Ascending aorta (tissue), 2 donors: ENCODE measurements at regions of chr6 and their contacts with region 1.

Region 1: GRCh38 chr6:72622094-72622940 is 453 bp downstream of the KCNQ5 start:
- DNase-seq: peak in 1 of 2 donors; percentile 72
- H3K4me3 ChIP-seq: peak overlapping the region; percentile 66 to 84
- H3K27ac ChIP-seq: peak overlapping the region; percentile 64 to 82
- H3K4me1 ChIP-seq: peaks cover 0 to 4% of the 10 kb centered on the region in 2 donors
- H3K27me3 ChIP-seq: no peaks in the 10 kb centered on the region
- CTCF ChIP-seq: peak in 2 of 3 experiments; percentile 12 to 42

Region 2: GRCh38 chr6:72411872-72412708 is 210.2 kb before region 1 on chr6:
- intact Hi-C with region 1: loop called (anchors 10 kb)
- DNase-seq: peak in 1 of 2 donors; percentile 85
- H3K4me3 ChIP-seq: no peak overlapping the region
- H3K27ac ChIP-seq: no peak overlapping the region
- H3K4me1 ChIP-seq: no peaks in the 10 kb centered on the region
- H3K27me3 ChIP-seq: no peaks in the 10 kb centered on the region
- CTCF ChIP-seq: peak; percentile 99 to 100 (median 100)

Region 3: GRCh38 chr6:72654071-72654621 is 31.8 kb after region 1 on chr6:
- intact Hi-C with region 1: loop called (anchors 2 kb)
- DNase-seq: no peak
- H3K4me3 ChIP-seq: no peak overlapping the region
- H3K27ac ChIP-seq: no peak overlapping the region
- H3K4me1 ChIP-seq: peaks cover 0 to 5% of the 10 kb centered on the region in 2 donors
- H3K27me3 ChIP-seq: no peaks in the 10 kb centered on the region
- CTCF ChIP-seq: no peak

Region 4: DNA sequence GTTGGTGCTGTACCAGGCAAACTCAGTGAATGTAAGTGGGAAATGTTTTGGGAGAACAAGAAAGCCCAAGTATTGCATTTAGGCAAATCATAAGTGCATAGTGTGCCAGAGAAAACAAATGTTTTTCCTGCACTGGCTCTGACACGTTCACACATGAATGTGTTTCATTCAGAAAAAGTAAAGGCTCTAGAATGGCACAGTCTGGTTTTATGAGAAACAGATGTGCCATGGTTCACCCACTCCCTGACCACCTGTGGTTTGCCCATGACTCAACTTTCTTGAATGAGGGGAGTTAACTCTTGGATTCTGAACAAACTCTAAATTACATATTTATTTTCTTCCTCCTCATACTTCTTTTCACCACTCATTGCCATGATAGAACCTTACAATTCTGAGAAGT is 126.4 kb after region 1 on chr6:
- intact Hi-C with region 1: loop called (anchors 5 kb)
- DNase-seq: no peak
- H3K4me3 ChIP-seq: no peak overlapping the region
- H3K27ac ChIP-seq: no peak overlapping the region
- H3K4me1 ChIP-seq: peaks cover 5 to 11% of the 10 kb centered on the region in 2 donors
- H3K27me3 ChIP-seq: no peaks in the 10 kb centered on the region
- CTCF ChIP-seq: no peak

Region 5: GRCh38 chr6:72811971-72812421 is 189.7 kb after region 1 on chr6:
- intact Hi-C with region 1: no loop called
- DNase-seq: no peak
- H3K4me3 ChIP-seq: no peak overlapping the region
- H3K27ac ChIP-seq: no peak overlapping the region
- H3K4me1 ChIP-seq: peaks cover 0 to 17% of the 10 kb centered on the region in 2 donors
- H3K27me3 ChIP-seq: no peaks in the 10 kb centered on the region
- CTCF ChIP-seq: no peak

Region 6: DNA sequence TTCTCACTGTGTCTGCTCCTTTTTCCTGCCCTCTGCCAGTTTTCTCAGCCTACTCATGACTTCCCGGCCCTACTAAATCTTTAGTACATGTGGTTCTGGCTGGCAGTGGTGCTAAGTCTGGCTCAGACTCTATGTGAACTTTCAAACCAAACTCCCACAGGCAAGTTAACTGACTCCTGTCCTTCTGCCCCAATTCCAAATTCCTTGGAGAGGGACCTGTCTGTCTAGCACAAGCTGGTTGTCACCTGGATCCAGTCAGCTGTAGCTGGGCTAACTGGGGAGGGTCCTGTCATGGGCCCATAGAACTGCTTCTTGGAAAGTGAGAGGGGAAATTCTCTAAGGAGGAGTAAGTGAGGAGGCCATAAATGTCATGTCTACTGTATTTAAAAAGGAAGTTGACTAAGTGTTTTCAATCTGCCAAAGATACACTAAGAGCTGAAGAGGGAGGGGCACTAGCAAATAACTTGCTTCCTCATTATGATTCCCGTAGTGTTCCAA is 239.7 kb after region 1 on chr6:
- intact Hi-C with region 1: loop called (anchors 5 kb)
- DNase-seq: peak in 1 of 2 donors; percentile 80
- H3K4me3 ChIP-seq: no peak overlapping the region
- H3K27ac ChIP-seq: peak overlapping the region; percentile 58 to 86
- H3K4me1 ChIP-seq: peaks cover 9 to 30% of the 10 kb centered on the region in 2 donors
- H3K27me3 ChIP-seq: no peaks in the 10 kb centered on the region
- CTCF ChIP-seq: no peak

Region 7: GRCh38 chr6:72950114-72950860 is 328.0 kb after region 1 on chr6:
- intact Hi-C with region 1: loop called (anchors 5 kb)
- DNase-seq: no peak
- H3K4me3 ChIP-seq: no peak overlapping the region
- H3K27ac ChIP-seq: peak overlapping the region; percentile 52 to 62
- H3K4me1 ChIP-seq: peaks cover 0 to 36% of the 10 kb centered on the region in 2 donors
- H3K27me3 ChIP-seq: no peaks in the 10 kb centered on the region
- CTCF ChIP-seq: no peak

Region 8: DNA sequence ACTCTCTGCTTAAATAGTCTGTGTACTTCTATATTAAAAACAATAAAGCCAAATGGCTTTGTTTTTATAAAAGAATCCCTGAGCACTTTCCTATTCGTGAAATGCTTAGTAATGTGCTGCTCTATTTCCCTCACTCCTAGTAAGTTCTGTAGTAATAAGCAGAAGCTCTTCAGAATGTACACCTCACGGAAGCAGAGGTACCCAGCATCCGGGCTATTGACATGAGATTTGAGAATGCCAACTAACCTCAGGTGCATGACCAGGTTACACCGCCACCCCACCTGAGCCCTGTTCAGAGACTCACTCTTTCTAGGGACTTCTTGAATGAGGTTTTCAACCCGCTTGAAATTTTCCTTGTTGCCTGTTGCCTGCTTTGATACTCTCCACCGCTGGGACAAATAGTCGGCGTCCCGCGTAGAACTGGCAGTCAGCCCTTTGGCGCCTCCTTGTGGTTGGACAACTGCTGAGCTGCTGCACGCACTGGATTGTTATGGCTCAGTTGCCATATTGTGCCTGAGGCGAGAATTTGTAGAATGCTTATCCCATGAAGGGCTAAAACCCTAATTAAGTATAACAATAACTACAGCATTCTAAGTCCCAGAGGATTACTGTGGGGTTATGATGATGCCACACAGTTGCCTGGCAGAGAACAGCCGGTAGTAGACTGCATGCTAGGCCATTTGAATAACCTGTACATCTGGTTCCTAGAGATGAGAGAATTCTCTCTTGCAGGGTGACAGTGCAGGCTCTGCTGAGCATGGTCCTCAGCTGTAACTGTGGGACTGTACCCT is 507.5 kb after region 1 on chr6:
- intact Hi-C with region 1: loop called (anchors 1 kb)
- DNase-seq: peak in 1 of 2 donors; percentile 88
- H3K4me3 ChIP-seq: peak overlapping the region in 1 of 2 donors; percentile 26
- H3K27ac ChIP-seq: no peak overlapping the region
- H3K4me1 ChIP-seq: no peaks in the 10 kb centered on the region
- H3K27me3 ChIP-seq: no peaks in the 10 kb centered on the region
- CTCF ChIP-seq: peak; percentile 87 to 99 (median 97)

Region 9: GRCh38 chr6:73216859-73217258 is 594.5 kb after region 1 on chr6:
- intact Hi-C with region 1: no loop called
- DNase-seq: no peak
- H3K4me3 ChIP-seq: no peak overlapping the region
- H3K27ac ChIP-seq: no peak overlapping the region
- H3K4me1 ChIP-seq: no peaks in the 10 kb centered on the region
- H3K27me3 ChIP-seq: no peaks in the 10 kb centered on the region
- CTCF ChIP-seq: no peak